Thyroid gland (tissue), 4 donors: ENCODE measurements at regions of chr22 and their contacts with region 1.

Region 1: GRCh38 chr22:46116491-46116958 is 33.8 kb upstream of the PPARA start:
- DNase-seq: peak; percentile 95
- H3K4me3 ChIP-seq: no peak overlapping the region
- H3K27ac ChIP-seq: peak overlapping the region; percentile 41 to 69 (median 59)
- H3K4me1 ChIP-seq: peaks cover 5 to 21% of the 10 kb centered on the region in 2 donors
- H3K27me3 ChIP-seq: no peaks in the 10 kb centered on the region
- CTCF ChIP-seq: peak; percentile 64 to 98 (median 88)
- POLR2A ChIP-seq: no peak

Region 2: GRCh38 chr22:45584121-45584570 is 532.4 kb before region 1 on chr22:
- intact Hi-C with region 1: loop called (anchors 10 kb)
- DNase-seq: no peak
- H3K4me3 ChIP-seq: no peak overlapping the region
- H3K27ac ChIP-seq: no peak overlapping the region
- H3K4me1 ChIP-seq: no peaks in the 10 kb centered on the region
- H3K27me3 ChIP-seq: no peaks in the 10 kb centered on the region
- CTCF ChIP-seq: no peak
- POLR2A ChIP-seq: no peak

Region 3: GRCh38 chr22:45925811-45926351 is 190.6 kb before region 1 on chr22:
- intact Hi-C with region 1: no loop called
- DNase-seq: no peak
- H3K4me3 ChIP-seq: no peak overlapping the region
- H3K27ac ChIP-seq: no peak overlapping the region
- H3K4me1 ChIP-seq: peaks cover 0 to 8% of the 10 kb centered on the region in 2 donors
- H3K27me3 ChIP-seq: no peaks in the 10 kb centered on the region
- CTCF ChIP-seq: no peak
- POLR2A ChIP-seq: no peak

Region 4: DNA sequence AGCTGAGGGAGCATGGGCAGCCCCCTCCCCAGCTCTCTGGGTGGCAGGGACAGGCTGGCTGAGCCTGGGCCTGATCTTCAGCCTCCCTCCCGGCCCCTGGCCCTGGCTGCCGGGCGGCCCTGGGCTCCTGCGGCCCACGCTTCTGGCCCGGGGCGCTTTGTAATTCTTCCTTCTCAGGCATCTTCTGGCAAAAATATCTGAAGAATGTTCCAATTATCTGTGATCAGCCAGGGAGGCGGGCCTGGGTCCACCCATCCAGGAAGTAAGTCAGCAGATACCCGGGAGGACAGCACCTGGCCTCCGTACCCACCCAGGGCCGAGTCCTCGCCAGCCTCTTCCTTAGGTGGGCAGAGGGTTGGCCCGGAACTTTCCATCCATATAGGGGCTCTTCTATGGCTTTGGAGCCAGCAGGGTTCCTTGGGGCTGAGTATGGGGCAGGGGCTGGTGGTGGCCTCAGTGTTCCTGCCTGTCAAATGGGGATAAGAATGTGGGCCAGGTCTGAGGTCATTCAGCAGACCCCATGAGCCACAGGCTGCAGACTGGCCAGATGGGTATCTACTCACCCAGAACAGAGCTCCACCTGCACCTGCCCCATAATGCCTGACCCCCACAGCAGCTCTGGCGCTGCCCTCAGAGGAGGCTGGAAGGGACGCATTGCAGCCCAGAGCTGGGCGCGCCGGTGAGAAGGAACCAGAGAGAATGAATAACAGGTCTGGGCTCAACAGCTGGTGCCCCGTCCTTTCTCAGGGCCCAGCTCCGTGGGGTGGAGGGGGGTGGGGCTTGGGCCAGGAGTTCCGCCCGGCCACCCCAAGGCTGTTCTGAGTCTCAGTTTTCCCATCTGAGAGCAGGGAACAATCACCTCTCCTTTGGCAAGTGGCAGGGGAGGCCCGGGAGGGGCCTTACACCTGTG is 155.8 kb before region 1 on chr22:
- intact Hi-C with region 1: no loop called
- DNase-seq: no peak
- H3K4me3 ChIP-seq: no peak overlapping the region
- H3K27ac ChIP-seq: no peak overlapping the region
- H3K4me1 ChIP-seq: no peaks in the 10 kb centered on the region
- H3K27me3 ChIP-seq: no peaks in the 10 kb centered on the region
- CTCF ChIP-seq: no peak
- POLR2A ChIP-seq: no peak

Region 5: GRCh38 chr22:45994491-45995404 is 121.8 kb before region 1 on chr22:
- intact Hi-C with region 1: loop called (anchors 2 kb)
- DNase-seq: peak; percentile 75 to 83
- H3K4me3 ChIP-seq: no peak overlapping the region
- H3K27ac ChIP-seq: no peak overlapping the region
- H3K4me1 ChIP-seq: peaks cover 34 to 53% of the 10 kb centered on the region in 2 donors
- H3K27me3 ChIP-seq: no peaks in the 10 kb centered on the region
- CTCF ChIP-seq: peak; percentile 93 to 97 (median 96)
- POLR2A ChIP-seq: no peak

Region 6: GRCh38 chr22:46006379-46007002 is 110.0 kb before region 1 on chr22:
- intact Hi-C with region 1: loop called (anchors 5 kb)
- DNase-seq: peak; percentile 92 to 95
- H3K4me3 ChIP-seq: no peak overlapping the region
- H3K27ac ChIP-seq: peak overlapping the region; percentile 74 to 98 (median 93)
- H3K4me1 ChIP-seq: peaks cover 30 to 64% of the 10 kb centered on the region in 2 donors
- H3K27me3 ChIP-seq: no peaks in the 10 kb centered on the region
- CTCF ChIP-seq: peak; percentile 92 to 98 (median 96)
- POLR2A ChIP-seq: no peak